ENCODE measurements at regions of chr4 and their contacts with region 1.

Region 1: DNA sequence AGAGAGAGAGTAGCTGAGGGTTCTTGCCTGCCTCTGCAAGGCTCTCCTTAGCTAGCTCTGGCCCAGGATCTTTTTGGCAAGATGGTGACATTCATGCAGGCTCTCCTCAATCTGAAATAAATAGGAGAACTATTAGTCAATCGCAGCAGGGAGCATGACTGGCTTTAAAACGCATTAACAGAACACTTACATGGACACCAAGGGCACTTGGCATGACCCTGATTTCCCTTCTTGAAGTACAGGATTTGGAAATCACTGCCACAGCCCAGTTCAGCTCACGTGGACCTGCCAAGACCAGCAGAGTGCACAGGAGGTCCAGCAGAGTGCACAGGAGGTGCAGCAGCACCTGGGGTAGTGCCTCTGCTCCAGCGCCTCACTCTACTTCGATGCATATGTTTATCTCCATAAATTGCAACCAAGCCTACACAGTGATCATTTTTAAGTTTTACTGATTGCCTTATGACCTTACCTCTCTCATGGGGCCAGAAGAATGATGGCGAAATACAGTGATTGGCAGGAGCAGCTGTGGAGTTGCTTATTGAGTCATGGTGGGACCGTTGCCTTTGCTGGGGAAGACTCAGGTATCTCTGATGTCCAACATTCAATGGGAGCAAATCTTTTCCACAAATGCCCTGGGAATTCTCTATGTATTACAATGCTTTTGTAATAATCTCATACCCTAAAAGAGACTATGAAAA is 122.4 kb downstream of the SYNPO2 start:
- DNase-seq: peak; percentile 94 to 97
- ATAC-seq: peak; percentile 93 to 96
- H3K4me3 ChIP-seq: peak overlapping the region in 3 of 4 donors; percentile 26 to 33 (median 30)
- H3K27ac ChIP-seq: peak overlapping the region; percentile 86 to 95 (median 90)
- H3K4me1 ChIP-seq: peaks cover 41 to 44% of the 10 kb centered on the region in 2 donors
- H3K27me3 ChIP-seq: no peaks in the 10 kb centered on the region
- CTCF ChIP-seq: no peak
- POLR2A ChIP-seq: peak; percentile 75 to 87

Region 2: DNA sequence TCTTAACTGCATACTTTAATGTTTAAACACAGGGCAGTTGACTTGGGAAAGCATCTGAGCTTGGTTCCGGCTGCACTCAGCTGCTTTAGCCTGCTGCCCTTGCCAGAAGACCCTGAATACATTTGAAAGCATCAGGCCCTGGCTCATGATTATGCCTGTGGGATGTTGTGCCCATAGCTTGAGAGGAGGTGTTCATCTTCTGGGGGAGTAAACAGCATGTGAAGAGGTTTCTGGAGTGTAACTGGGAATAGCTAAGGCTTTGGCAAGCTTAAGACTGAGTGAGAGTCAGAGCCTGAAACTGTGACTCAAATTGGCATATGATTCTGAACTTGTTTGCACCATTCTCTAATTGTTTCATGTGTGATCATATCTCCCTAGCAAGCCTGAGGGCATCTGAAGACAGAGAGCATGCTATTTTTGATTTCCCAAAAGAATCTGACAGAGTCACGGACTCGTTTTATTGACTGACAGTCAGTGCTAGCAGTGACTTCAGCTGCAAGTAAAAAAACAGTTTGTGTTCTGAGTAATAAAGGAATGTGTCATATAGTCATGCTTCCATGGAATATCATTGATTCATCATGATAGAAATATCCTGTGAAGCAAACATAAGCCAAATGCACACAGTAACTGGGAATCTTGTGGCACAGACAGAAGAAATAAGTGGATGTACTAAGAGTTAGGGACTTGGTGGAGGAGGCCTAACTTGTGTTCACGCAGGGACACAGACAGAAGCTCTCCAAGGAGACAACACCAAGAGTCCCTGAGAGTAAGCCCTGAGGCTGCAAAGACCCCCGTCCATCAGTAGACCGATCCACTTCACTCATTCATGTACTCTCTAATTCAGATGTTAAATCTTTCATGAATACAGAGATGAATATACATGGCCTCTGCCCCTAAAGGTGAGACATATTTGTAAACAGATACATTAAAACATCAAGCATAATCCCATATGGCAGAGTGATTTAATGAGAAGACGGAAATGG is 21.7 kb before region 1 on chr4:
- in situ Hi-C with region 1: no loop called
- intact Hi-C with region 1: loop called (anchors 2 kb)
- DNase-seq: peak; percentile 54 to 59
- ATAC-seq: peak; percentile 65 to 71
- H3K4me3 ChIP-seq: peak overlapping the region in 1 of 4 donors; percentile 12
- H3K27ac ChIP-seq: peak overlapping the region; percentile 87 to 99 (median 91)
- H3K4me1 ChIP-seq: peaks cover 80 to 84% of the 10 kb centered on the region in 2 donors
- H3K27me3 ChIP-seq: no peaks in the 10 kb centered on the region
- CTCF ChIP-seq: no peak
- POLR2A ChIP-seq: peak; percentile 70 to 80

Region 3: DNA sequence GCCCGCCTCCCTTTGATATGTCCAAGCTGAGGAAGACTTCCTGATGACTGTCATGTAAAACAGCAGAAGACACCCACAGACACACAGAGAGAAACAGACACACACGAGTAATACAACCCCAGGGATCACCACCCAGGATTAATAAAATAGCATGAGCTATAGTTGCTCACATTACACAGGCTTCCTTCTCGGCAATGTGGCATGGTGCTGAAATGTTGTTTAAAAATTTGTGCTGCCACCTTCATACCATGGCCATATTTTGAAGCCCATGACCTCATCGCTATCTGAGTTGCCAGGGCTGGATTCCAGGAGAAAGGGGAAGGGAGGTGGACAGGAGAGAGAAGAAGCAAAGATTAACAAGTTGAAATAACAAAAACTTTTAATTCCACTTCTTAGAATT is 10.7 kb before region 1 on chr4:
- in situ Hi-C with region 1: no loop called
- intact Hi-C with region 1: loop called (anchors 1 kb)
- DNase-seq: peak; percentile 73 to 75
- ATAC-seq: peak; percentile 69 to 78
- H3K4me3 ChIP-seq: peak overlapping the region in 3 of 4 donors; percentile 20 to 29 (median 28)
- H3K27ac ChIP-seq: peak overlapping the region; percentile 87 to 99 (median 91)
- H3K4me1 ChIP-seq: peaks cover 58 to 69% of the 10 kb centered on the region in 2 donors
- H3K27me3 ChIP-seq: no peaks in the 10 kb centered on the region
- CTCF ChIP-seq: no peak
- POLR2A ChIP-seq: peak in 1 of 2 donors; percentile 54

Region 4: GRCh38 chr4:119025916-119026661 is 15.0 kb after region 1 on chr4:
- in situ Hi-C with region 1: no loop called
- intact Hi-C with region 1: loop called (anchors 1 kb)
- DNase-seq: peak; percentile 74 to 87
- ATAC-seq: peak; percentile 64 to 66
- H3K4me3 ChIP-seq: peak overlapping the region; percentile 55 to 74 (median 67)
- H3K27ac ChIP-seq: peak overlapping the region; percentile 94 to 98 (median 96)
- H3K4me1 ChIP-seq: peaks cover 19 to 33% of the 10 kb centered on the region in 2 donors
- H3K27me3 ChIP-seq: no peaks in the 10 kb centered on the region
- CTCF ChIP-seq: no peak
- POLR2A ChIP-seq: peak; percentile 68 to 81